ENCODE measurements at regions of chr7 and their contacts with region 1.

Region 1: GRCh38 chr7:47170516-47170915 is 411.4 kb downstream of the TNS3 start:
- DNase-seq: no peak
- ATAC-seq: no peak
- H3K4me3 ChIP-seq: no peak overlapping the region
- H3K27ac ChIP-seq: no peak overlapping the region
- H3K4me1 ChIP-seq: no peaks in the 10 kb centered on the region
- H3K27me3 ChIP-seq: no peaks in the 10 kb centered on the region
- CTCF ChIP-seq: peak in 5 of 9 donors; percentile 10 to 27 (median 15)

Region 2: DNA sequence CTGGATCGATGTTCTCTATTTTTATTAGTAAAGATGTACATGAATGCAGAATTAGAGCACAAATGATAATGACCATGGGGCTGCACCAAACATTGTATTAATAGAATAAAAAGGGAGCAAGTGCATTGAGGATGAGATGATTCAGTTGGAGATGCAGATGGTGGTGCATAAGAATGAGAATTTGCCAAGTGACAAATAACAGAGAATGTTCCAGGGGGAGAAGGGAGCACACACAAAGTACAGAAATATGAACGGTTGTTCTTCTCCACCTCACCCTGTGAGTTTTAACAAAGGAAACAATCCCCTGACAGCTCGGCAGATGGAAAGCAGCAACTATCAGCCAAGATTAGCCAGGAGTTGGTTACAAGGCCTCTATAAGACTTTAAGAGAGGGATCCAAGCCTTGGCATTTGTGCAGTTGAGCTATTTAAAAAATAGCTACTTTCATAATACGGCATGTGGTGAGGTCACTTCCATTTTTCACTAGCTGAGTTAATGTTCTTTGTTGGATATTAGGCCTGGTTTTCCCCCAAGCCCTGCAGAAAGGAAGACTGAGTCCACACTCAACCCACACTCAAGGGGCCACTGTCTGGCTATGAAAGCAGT is 51.2 kb before region 1 on chr7:
- intact Hi-C with region 1: loop called in 1 of 10 experiments (anchors 10 kb)
- DNase-seq: no peak
- ATAC-seq: peak in 2 of 8 donors; percentile 42 to 44
- H3K4me3 ChIP-seq: no peak overlapping the region
- H3K27ac ChIP-seq: no peak overlapping the region
- H3K4me1 ChIP-seq: peaks cover 0 to 4% (median 0%) of the 10 kb centered on the region in 9 donors
- H3K27me3 ChIP-seq: no peaks in the 10 kb centered on the region
- CTCF ChIP-seq: no peak